ENCODE measurements at regions of chr5 and their contacts with region 1.

Region 1: GRCh38 chr5:148826053-148826738 is at the start of gene ADRB2:
- DNase-seq: peak; percentile 98
- H3K4me3 ChIP-seq: peak within 1 kb of the TSS; percentile 36 to 57
- H3K27ac ChIP-seq: peak within 1 kb of the TSS; percentile 89 to 93
- H3K4me1 ChIP-seq: no peaks in the 10 kb centered on the region
- H3K27me3 ChIP-seq: no peaks in the 10 kb centered on the region
- CTCF ChIP-seq: no peak
- POLR2A ChIP-seq: peak; percentile 81
- total RNA-seq, gene ADRB2: 6.8 to 29.0 TPM

Region 2: GRCh38 chr5:148922606-148923005 is 96.4 kb after region 1 on chr5:
- intact Hi-C with region 1: loop called (anchors 10 kb)
- DNase-seq: no peak
- H3K4me3 ChIP-seq: no peak overlapping the region
- H3K27ac ChIP-seq: no peak overlapping the region
- H3K4me1 ChIP-seq: no peaks in the 10 kb centered on the region
- H3K27me3 ChIP-seq: no peaks in the 10 kb centered on the region
- CTCF ChIP-seq: no peak
- POLR2A ChIP-seq: no peak

Region 3: DNA sequence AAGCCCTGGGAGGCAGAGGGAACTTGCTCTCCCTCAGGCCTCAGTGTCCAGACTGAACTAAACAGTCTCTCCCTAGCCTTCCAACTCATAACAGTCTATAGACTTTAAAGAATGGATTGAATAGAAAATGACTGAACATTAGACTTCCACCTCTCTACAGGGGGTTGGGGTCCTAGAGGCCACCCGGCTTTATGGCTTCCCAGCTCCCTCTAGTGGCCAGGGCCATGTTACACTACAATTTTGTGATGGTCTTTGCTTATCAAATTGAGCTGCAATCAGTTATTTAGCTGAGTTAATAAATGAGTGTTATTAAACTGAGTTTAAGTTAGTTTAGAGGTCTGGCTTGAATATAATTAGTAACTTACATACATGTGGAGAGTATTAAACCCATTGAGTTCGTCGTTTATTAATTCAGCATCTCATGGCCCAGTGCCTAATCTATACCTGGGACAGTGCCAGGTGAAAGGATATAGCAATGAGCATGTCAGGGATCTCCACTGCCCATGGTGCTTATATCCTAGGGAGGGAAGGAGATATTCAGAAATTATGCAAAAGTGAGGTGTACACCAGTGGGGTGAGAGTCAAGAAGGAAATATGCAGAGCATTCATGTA is 131.5 kb after region 1 on chr5:
- intact Hi-C with region 1: loop called (anchors 10 kb)
- DNase-seq: no peak
- H3K4me3 ChIP-seq: no peak overlapping the region
- H3K27ac ChIP-seq: no peak overlapping the region
- H3K4me1 ChIP-seq: no peaks in the 10 kb centered on the region
- H3K27me3 ChIP-seq: no peaks in the 10 kb centered on the region
- CTCF ChIP-seq: peak; percentile 58 to 75 (median 70)
- POLR2A ChIP-seq: no peak

Region 4: GRCh38 chr5:148998174-148998797 is 172.1 kb after region 1 on chr5:
- intact Hi-C with region 1: loop called (anchors 10 kb)
- DNase-seq: peak; percentile 77
- H3K4me3 ChIP-seq: no peak overlapping the region
- H3K27ac ChIP-seq: no peak overlapping the region
- H3K4me1 ChIP-seq: no peaks in the 10 kb centered on the region
- H3K27me3 ChIP-seq: no peaks in the 10 kb centered on the region
- CTCF ChIP-seq: peak in 3 of 4 experiments; percentile 70 to 82 (median 76)
- POLR2A ChIP-seq: no peak

Measured in prostate gland (tissue), 2 donors.